ENCODE measurements at regions of chr17 and their contacts with region 1.

Region 1: GRCh38 chr17:75749545-75750389 is 15.2 kb downstream of the GALK1 start:
- DNase-seq: peak; percentile 94
- H3K4me3 ChIP-seq: peak overlapping the region in 1 of 4 donors; percentile 24
- H3K27ac ChIP-seq: peak overlapping the region in 2 of 4 donors; percentile 11 to 26
- H3K4me1 ChIP-seq: peaks cover 0 to 33% (median 22%) of the 10 kb centered on the region in 4 donors
- H3K27me3 ChIP-seq: no peaks in the 10 kb centered on the region
- CTCF ChIP-seq: peak; percentile 90 to 95 (median 91)
- EP300 ChIP-seq: no peak
- POLR2A ChIP-seq: no peak

Region 2: GRCh38 chr17:75430159-75430974 is 319.4 kb before region 1 on chr17:
- intact Hi-C with region 1: loop called (anchors 5 kb)
- DNase-seq: no peak
- H3K4me3 ChIP-seq: no peak overlapping the region
- H3K27ac ChIP-seq: peak overlapping the region; percentile 72 to 82 (median 80)
- H3K4me1 ChIP-seq: peaks cover 0 to 39% (median 26%) of the 10 kb centered on the region in 4 donors
- H3K27me3 ChIP-seq: no peaks in the 10 kb centered on the region
- CTCF ChIP-seq: no peak
- EP300 ChIP-seq: no peak
- POLR2A ChIP-seq: no peak

Region 3: DNA sequence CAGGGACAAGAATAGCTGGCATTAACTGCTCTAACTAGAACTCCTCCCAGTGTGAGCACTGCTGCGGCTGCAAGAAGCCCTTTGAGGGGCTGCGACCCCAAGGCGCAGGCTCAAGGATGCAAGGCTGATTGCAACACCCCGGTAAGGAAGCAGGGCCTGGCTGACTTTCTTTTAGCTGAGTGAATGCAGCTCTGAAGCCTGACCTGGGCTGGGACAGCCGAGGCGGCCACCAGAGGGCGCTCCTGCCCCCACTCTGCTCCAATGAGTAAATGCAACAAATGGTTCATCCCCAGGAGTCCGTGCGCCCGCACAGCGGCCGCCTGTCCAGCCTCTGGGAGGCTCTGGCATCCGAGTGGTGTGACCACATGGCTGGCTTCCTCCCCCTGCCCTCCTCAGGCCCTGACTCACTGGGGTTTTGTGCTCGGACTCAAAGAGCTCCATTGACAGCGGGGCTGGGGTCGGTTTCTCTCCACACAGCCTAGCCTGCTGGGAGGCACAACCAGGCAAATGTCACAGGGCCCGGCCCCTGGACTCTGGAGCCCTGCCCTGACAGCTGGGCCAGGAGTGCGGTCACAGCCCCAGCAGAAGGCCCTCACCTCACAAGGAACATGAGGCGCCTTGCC is 116.8 kb before region 1 on chr17 and contains the start of gene SMIM5:
- intact Hi-C with region 1: loop called (anchors 1 kb)
- DNase-seq: peak; percentile 95
- H3K4me3 ChIP-seq: peak within 1 kb of the TSS; percentile 4 to 35 (median 32)
- H3K27ac ChIP-seq: peak within 1 kb of the TSS; percentile 76 to 85 (median 82)
- H3K4me1 ChIP-seq: peaks cover 0 to 32% (median 23%) of the 10 kb centered on the region in 4 donors
- H3K27me3 ChIP-seq: no peaks in the 10 kb centered on the region
- CTCF ChIP-seq: peak; percentile 58 to 93 (median 84)
- EP300 ChIP-seq: no peak
- POLR2A ChIP-seq: no peak
- total RNA-seq, gene SMIM5: 0.82 to 7.2 (median 3.8) TPM

Region 4: GRCh38 chr17:75667021-75667790 is 82.6 kb before region 1 on chr17 and contains the starts of genes RECQL5 and SAP30BP:
- intact Hi-C with region 1: loop called (anchors 2 kb)
- DNase-seq: peak; percentile 99
- H3K4me3 ChIP-seq: peak within 1 kb of the TSS; percentile 73 to 86 (median 84)
- H3K27ac ChIP-seq: peak within 1 kb of the TSS; percentile 81 to 90 (median 88)
- H3K4me1 ChIP-seq: peaks cover 0 to 39% (median 26%) of the 10 kb centered on the region in 4 donors
- H3K27me3 ChIP-seq: no peaks in the 10 kb centered on the region
- CTCF ChIP-seq: no peak
- EP300 ChIP-seq: peak in 1 of 4 donors; percentile 10
- POLR2A ChIP-seq: peak; percentile 69 to 71
- total RNA-seq, gene RECQL5: 5.1 to 11.6 (median 11.3) TPM
- total RNA-seq, gene SAP30BP: 53.5 to 96.9 (median 63.6) TPM

Region 5: DNA sequence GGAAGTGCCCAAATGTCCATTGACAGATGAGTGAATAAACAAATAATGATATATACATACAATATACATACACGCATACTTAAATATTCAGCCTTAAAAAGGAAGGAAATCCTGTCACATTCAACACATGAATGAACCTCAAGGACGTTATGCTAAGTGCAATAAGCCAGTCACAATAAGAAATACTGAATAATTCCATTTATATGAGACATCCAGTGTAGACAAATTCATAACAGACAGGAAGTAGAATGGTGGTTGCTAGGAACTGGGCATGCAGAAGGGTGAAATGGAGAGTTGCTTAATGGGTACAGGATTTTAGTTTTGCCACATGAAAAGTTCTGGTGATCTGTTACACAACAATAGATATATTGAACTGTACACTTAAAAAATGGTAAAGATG is 37.3 kb before region 1 on chr17:
- intact Hi-C with region 1: loop called (anchors 5 kb)
- DNase-seq: no peak
- H3K4me3 ChIP-seq: no peak overlapping the region
- H3K27ac ChIP-seq: no peak overlapping the region
- H3K4me1 ChIP-seq: no peaks in the 10 kb centered on the region
- H3K27me3 ChIP-seq: peaks cover 0 to 18% (median 0%) of the 10 kb centered on the region in 3 donors
- CTCF ChIP-seq: no peak
- EP300 ChIP-seq: no peak
- POLR2A ChIP-seq: no peak